ENCODE measurements at regions of chr1 and their contacts with region 1.

Region 1: DNA sequence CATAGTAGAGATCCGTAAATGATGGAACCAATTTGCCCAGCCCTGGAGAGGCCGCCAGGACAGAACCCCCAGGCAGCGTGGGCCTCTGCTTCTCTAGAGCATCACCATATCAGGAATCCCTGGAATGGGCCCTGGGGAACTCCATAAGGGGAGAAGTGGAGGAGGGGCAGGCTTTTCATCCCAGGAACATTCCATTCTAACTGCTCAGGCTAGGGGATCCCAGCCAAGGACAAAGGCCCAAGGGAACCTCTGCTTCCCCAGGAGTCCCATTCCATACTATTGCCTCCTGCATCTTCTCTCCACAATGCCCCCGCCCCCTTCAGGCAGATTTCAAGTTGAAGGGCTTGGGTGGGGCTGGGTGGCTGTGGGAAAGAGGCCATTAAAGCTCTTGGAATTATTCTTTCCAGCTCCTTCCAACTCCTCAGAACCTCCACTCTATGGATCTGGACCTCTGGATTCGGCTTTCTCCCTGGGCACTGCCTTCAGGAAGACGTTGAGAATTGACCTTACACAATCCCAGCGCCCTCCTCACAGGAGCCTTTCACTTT is 6.0 kb downstream of the TRNP1 start:
- DNase-seq: peak; percentile 86
- ATAC-seq: peak; percentile 74
- H3K4me3 Mint-ChIP-seq: peak overlapping the region; percentile 20; the same call in 1 of the 2 replicates
- H3K27ac Mint-ChIP-seq: peak overlapping the region; percentile 97
- H3K4me1 Mint-ChIP-seq: peaks cover 92% of the 10 kb centered on the region
- H3K27me3 Mint-ChIP-seq: no peaks in the 10 kb centered on the region
- CTCF ChIP-seq: no peak

Region 2: GRCh38 chr1:26744075-26744959 is 255.2 kb before region 1 on chr1:
- CTCF ChIA-PET with region 1: no interaction called
- POLR2A ChIA-PET with region 1: no interaction called
- DNase-seq: peak; percentile 62
- ATAC-seq: peak; percentile 98
- H3K4me3 Mint-ChIP-seq: no peak overlapping the region
- H3K27ac Mint-ChIP-seq: peak overlapping the region; percentile 97
- H3K4me1 Mint-ChIP-seq: peaks cover 28% of the 10 kb centered on the region
- H3K27me3 Mint-ChIP-seq: no peaks in the 10 kb centered on the region
- CTCF ChIP-seq: no peak

Region 3: GRCh38 chr1:26890467-26890796 is 109.1 kb before region 1 on chr1:
- CTCF ChIA-PET with region 1: no interaction called
- POLR2A ChIA-PET with region 1: no interaction called
- DNase-seq: no peak
- ATAC-seq: peak; percentile 54
- H3K4me3 Mint-ChIP-seq: peak overlapping the region; percentile 97
- H3K27ac Mint-ChIP-seq: peak overlapping the region; percentile 87
- H3K4me1 Mint-ChIP-seq: peaks cover 8% of the 10 kb centered on the region
- H3K27me3 Mint-ChIP-seq: no peaks in the 10 kb centered on the region
- CTCF ChIP-seq: no peak

Region 4: GRCh38 chr1:26949926-26950319 is 49.6 kb before region 1 on chr1:
- CTCF ChIA-PET with region 1: no interaction called
- POLR2A ChIA-PET with region 1: no interaction called
- DNase-seq: no peak
- ATAC-seq: no peak
- H3K4me3 Mint-ChIP-seq: no peak overlapping the region
- H3K27ac Mint-ChIP-seq: no peak overlapping the region
- H3K4me1 Mint-ChIP-seq: no peaks in the 10 kb centered on the region
- H3K27me3 Mint-ChIP-seq: no peaks in the 10 kb centered on the region
- CTCF ChIP-seq: no peak

Region 5: GRCh38 chr1:26970810-26971209 is 28.7 kb before region 1 on chr1:
- CTCF ChIA-PET with region 1: interaction called, 73 read pairs
- POLR2A ChIA-PET with region 1: interaction called, 13 read pairs
- DNase-seq: no peak
- ATAC-seq: no peak
- H3K4me3 Mint-ChIP-seq: no peak overlapping the region
- H3K27ac Mint-ChIP-seq: no peak overlapping the region
- H3K4me1 Mint-ChIP-seq: peaks cover 19% of the 10 kb centered on the region
- H3K27me3 Mint-ChIP-seq: peaks cover 5% of the 10 kb centered on the region; the same call in 1 of the 2 replicates
- CTCF ChIP-seq: no peak

Region 6: DNA sequence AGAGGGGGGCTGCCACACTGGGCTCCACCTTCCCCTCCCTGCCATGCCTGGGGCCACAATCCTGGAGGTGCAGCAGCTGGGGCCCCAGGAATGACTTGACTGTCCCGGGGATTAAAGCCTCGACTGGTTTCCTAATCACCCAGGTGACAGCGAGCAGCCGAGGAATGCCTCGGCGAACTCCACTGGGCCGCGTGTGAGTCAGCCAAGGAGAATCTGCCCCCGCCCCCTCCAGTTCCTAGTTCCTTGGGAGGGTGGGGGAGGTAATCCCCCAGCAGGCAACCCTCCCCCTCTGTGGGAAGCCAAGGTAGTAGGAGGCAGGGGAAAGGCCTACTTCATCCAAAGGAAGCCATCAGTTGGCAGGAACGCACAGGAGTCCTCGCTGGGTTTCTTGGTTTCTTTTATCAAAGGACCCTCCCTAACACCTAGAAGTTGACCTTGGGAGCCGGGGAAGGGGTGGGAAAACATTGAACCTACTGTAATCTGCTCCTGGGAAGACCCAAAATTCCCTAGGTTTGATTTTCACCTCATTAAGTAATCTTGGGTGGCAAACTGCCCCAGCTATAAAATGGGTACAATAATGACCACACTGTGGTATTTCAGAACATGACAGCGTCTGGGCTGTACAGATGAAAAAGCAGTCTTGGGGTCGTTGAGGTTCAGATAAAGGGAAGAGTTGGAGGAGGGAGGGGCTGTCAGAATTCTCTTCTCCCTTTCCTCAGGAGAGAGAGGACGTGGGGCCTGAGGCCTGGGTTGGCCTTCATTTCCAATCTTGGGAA is 11.7 kb after region 1 on chr1:
- CTCF ChIA-PET with region 1: interaction called, 126 read pairs
- POLR2A ChIA-PET with region 1: interaction called, 83 read pairs
- DNase-seq: peak; percentile 92
- ATAC-seq: peak; percentile 16
- H3K4me3 Mint-ChIP-seq: peak overlapping the region; percentile 88
- H3K27ac Mint-ChIP-seq: peak overlapping the region; percentile 92
- H3K4me1 Mint-ChIP-seq: peaks cover 57% of the 10 kb centered on the region
- H3K27me3 Mint-ChIP-seq: no peaks in the 10 kb centered on the region
- CTCF ChIP-seq: no peak

Region 7: DNA sequence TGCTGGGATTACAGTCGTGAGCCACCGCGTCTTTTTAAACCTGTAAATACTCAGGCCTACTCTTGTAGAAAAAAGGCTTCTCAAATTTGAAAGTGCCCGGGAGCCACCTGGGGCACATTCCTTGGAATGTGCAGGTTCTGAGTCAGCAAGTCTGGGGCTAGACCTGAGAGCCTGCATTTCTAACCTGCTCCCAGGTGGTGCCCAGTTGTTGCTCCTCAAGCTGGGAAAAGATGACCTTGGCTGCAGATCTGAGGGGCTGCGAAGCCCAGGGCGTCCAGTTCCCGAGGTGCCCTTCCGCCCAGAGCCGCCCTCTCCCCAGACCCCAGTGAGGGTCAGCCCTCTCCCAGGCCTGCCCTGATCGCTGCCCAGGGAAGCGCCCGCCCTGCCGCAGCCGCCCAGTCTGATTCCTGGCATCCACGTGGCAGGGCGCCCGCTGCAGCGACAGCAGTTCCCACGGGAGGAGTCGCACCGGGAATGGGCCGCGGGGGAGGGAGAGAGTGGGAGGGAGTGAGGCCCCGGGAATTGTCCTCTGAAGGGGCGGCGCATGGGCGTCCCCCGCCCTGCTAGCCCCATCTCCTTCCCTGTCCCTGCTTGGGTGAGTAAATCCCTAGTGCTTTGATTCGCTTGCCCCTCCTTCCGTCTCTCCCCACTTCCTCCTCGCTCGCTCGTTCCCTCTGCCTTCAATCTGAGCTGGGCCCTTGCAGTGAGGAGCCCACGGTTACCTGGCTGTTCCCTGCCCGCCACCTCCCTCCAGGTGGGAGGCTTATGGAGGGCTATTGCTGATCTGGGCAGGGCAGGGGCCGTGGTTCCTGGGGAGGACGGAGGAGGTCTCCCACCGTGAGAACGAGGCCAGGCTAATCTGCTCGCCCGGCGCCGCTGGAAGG is 32.0 kb after region 1 on chr1:
- CTCF ChIA-PET with region 1: interaction called, 11 read pairs
- POLR2A ChIA-PET with region 1: interaction called, 27 read pairs
- DNase-seq: peak; percentile 65
- ATAC-seq: peak; percentile 64
- H3K4me3 Mint-ChIP-seq: peak overlapping the region; percentile 49
- H3K27ac Mint-ChIP-seq: peak overlapping the region; percentile 84
- H3K4me1 Mint-ChIP-seq: peaks cover 38% of the 10 kb centered on the region
- H3K27me3 Mint-ChIP-seq: no peaks in the 10 kb centered on the region
- CTCF ChIP-seq: no peak

Region 8: GRCh38 chr1:27057801-27058625 is 58.5 kb after region 1 on chr1:
- CTCF ChIA-PET with region 1: interaction called, 18 read pairs
- POLR2A ChIA-PET with region 1: interaction called, 5 read pairs
- DNase-seq: peak; percentile 68
- ATAC-seq: peak; percentile 43
- H3K4me3 Mint-ChIP-seq: peak overlapping the region; percentile 61
- H3K27ac Mint-ChIP-seq: peak overlapping the region; percentile 98
- H3K4me1 Mint-ChIP-seq: peaks cover 45% of the 10 kb centered on the region
- H3K27me3 Mint-ChIP-seq: no peaks in the 10 kb centered on the region; the same call in 1 of the 2 replicates
- CTCF ChIP-seq: no peak